ENCODE measurements at regions of chr3 and their contacts with region 1.

Region 1: GRCh38 chr3:129026728-129027543 is 25.8 kb downstream of the EFCC1 start:
- DNase-seq: peak; percentile 94
- ATAC-seq: peak; percentile 86

Region 2: DNA sequence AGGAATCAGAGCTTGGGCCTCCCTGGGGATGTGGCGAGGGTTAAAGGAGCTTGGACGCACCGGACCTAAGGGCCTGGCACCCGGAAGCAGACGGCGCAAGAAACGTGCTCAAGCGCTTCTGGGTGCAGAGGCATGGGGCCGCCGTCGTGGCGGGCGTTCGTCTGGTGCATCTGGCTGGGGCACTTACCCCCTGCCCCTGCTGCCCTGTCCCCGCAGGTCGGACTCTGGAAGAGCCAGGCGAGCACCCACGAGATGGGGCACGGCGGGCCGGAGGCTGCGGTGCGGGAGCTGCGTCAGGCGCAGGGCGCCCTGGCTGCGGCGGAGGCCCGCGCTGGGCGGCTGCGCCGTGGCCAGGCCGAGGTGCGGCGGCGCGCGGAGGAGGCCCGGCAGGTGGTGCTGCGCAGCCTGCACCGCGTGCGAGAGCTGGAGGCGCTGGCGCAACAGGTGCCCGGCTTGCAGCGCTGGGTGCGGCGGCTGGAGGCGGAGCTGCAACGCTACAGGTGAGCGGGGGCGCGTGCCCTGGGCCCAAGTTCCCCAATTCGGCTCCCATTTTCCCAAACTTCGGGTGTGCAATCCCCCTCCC is 23.3 kb before region 1 on chr3:
- intact Hi-C with region 1: loop called (anchors 2 kb)
- DNase-seq: no peak
- ATAC-seq: no peak

Region 3: DNA sequence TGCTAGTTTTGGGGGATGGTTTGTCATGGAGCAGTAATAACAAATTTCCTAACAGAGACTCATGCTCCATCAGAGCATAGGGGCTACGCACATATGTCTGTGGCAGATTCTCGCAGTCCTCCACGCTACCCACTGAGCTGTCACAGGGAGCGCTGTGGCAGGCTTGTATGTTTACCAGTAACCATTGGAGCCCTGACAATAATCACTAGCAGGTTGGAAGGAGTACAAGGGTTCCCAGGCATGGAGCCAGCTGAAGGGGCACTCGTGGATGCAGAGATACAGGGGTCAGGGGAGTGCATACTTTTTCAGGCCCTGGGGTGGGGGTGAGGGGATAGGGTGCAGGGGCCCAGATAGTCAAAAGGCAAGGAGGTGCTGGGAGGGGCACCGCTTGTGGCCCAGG is 25.7 kb after region 1 on chr3:
- intact Hi-C with region 1: loop called (anchors 2 kb)
- DNase-seq: peak; percentile 76
- ATAC-seq: peak; percentile 83

Measured in Right ventricle myocardium inferior (tissue), 1 donor.